Endothelial cell of umbilical vein (primary cell): ENCODE measurements at regions of chr9 and their contacts with region 1.

Region 1: GRCh38 chr9:37913480-37914153 is 9.7 kb upstream of the SLC25A51 start:
- DNase-seq: peak; percentile 84
- H3K4me3 ChIP-seq: no peak overlapping the region
- H3K27ac ChIP-seq: no peak overlapping the region
- H3K4me1 ChIP-seq: peaks cover 17% of the 10 kb centered on the region
- H3K27me3 ChIP-seq: no peaks in the 10 kb centered on the region
- CTCF ChIP-seq: peak; percentile 89 to 92
- POLR2A ChIP-seq: no peak

Region 2: DNA sequence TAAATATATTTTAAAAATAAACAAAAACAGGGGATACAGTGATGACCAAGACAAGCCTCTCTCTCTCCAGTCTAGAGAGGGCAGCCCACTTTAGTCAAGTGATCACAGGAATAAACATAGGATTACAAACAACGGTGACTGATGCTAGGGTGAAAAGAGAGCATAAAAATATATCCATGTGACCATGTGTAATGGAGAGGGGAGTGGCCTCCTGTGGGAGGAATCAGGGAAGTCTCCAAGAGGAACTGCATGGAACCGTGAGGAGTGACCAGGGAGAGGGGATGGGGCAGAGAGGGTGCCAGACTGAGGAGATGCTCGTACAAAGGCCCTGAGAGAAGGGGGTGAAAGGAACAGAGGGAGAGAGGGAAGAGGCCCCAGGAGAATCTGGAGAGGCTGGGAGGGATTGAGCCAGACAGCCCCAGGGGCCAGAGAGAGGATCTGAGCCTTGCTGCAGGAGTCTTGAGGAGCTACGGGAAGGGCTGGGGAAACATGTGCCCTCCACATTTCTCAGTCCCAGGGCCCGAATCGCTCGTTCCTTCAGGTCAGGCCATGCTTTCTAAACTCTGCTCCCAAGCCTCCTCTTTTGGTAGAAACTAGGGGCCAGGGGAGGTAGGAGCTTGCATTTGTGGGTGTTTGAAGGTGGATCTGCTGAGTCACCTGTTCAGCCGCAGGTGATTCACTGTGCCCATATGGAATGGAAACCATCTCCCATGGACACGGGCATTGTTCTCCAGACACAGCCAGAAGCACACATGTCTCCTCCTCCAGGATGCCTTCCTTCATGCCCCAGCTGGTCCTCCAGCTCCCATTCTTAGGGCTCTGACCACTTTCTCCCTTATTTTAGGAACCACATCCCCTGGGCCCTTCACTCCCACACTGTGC is 943.4 kb before region 1 on chr9:
- CTCF ChIA-PET with region 1: no interaction called
- POLR2A ChIA-PET with region 1: no interaction called
- dilution Hi-C with region 1: no loop called
- intact Hi-C with region 1: no loop called
- DNase-seq: no peak
- H3K4me3 ChIP-seq: no peak overlapping the region
- H3K27ac ChIP-seq: no peak overlapping the region
- H3K4me1 ChIP-seq: no peaks in the 10 kb centered on the region
- H3K27me3 ChIP-seq: peaks cover 0 to 3% of the 10 kb centered on the region in 2 experiments
- CTCF ChIP-seq: no peak
- POLR2A ChIP-seq: no peak

Region 3: GRCh38 chr9:37820142-37820541 is 93.5 kb before region 1 on chr9:
- CTCF ChIA-PET with region 1: no interaction called
- POLR2A ChIA-PET with region 1: no interaction called
- dilution Hi-C with region 1: no loop called
- intact Hi-C with region 1: no loop called
- DNase-seq: no peak
- H3K4me3 ChIP-seq: no peak overlapping the region
- H3K27ac ChIP-seq: no peak overlapping the region
- H3K4me1 ChIP-seq: no peaks in the 10 kb centered on the region
- H3K27me3 ChIP-seq: no peaks in the 10 kb centered on the region
- CTCF ChIP-seq: no peak
- POLR2A ChIP-seq: no peak

Region 4: DNA sequence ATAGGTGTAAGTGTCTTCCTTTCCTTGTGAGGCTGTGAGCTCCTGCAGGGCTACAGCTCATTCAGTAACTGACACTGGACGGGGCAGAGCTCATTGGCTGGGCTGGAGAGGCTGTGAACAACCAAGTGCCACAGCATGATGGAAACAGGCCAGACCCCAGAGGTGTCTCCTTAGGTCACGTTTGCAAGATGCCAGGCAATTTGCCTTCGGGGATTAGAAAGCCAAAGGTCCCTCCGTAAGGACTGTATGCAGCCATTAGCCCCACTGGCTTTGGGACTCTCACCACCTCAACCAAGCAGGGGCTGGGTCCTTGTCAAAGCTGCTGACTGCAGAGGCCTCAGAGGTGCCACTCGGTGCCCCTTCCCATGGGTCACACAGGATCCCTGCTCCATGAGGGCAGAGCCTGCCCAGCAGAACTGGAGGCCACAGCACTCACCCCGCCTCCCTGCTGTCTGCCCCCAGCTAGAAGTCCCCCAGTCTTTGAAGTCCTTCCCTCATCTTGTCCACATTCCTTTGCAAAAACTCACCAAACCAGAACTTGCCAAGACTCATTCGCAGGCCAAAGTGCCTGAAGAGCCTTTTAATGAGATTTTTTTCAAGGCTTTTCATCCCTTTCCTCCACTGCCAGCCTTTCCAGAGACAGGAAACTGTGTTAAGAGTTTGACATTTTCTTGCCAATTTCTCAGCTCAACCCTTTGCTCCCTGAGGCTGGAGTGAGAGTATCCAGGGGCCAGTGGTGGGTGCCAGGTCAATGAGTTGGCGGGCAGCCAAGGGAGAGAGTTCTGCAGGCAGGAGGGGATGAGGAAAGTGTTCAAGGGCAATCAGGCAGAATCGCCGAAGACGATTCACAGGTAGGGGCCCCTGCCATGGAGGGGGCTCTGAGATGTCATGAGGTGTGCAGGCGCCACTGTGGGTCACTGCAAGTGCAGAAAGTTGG is 30.0 kb after region 1 on chr9:
- CTCF ChIA-PET with region 1: interaction called, 23 read pairs
- POLR2A ChIA-PET with region 1: interaction called, 3 read pairs
- dilution Hi-C with region 1: no loop called
- intact Hi-C with region 1: loop called (anchors 1 kb)
- DNase-seq: peak; percentile 58
- H3K4me3 ChIP-seq: no peak overlapping the region
- H3K27ac ChIP-seq: peak overlapping the region; percentile 16
- H3K4me1 ChIP-seq: peaks cover 28% of the 10 kb centered on the region
- H3K27me3 ChIP-seq: no peaks in the 10 kb centered on the region
- CTCF ChIP-seq: no peak
- POLR2A ChIP-seq: no peak

Region 5: GRCh38 chr9:38008168-38009034 is 94.8 kb after region 1 on chr9:
- CTCF ChIA-PET with region 1: interaction called, 6 read pairs
- POLR2A ChIA-PET with region 1: no interaction called
- dilution Hi-C with region 1: no loop called
- intact Hi-C with region 1: loop called (anchors 2 kb)
- DNase-seq: peak; percentile 80
- H3K4me3 ChIP-seq: no peak overlapping the region
- H3K27ac ChIP-seq: peak overlapping the region; percentile 79
- H3K4me1 ChIP-seq: peaks cover 30% of the 10 kb centered on the region
- H3K27me3 ChIP-seq: no peaks in the 10 kb centered on the region
- CTCF ChIP-seq: no peak
- POLR2A ChIP-seq: no peak

Region 6: GRCh38 chr9:38035873-38036272 is 122.3 kb after region 1 on chr9:
- CTCF ChIA-PET with region 1: interaction called, 12 read pairs
- POLR2A ChIA-PET with region 1: no interaction called
- dilution Hi-C with region 1: no loop called
- intact Hi-C with region 1: no loop called
- DNase-seq: peak; percentile 56
- H3K4me3 ChIP-seq: no peak overlapping the region
- H3K27ac ChIP-seq: peak overlapping the region; percentile 66
- H3K4me1 ChIP-seq: peaks cover 59% of the 10 kb centered on the region
- H3K27me3 ChIP-seq: no peaks in the 10 kb centered on the region
- CTCF ChIP-seq: no peak
- POLR2A ChIP-seq: no peak

Region 7: GRCh38 chr9:38088006-38088925 is 174.6 kb after region 1 on chr9:
- CTCF ChIA-PET with region 1: interaction called, 82 read pairs
- POLR2A ChIA-PET with region 1: no interaction called
- dilution Hi-C with region 1: no loop called
- intact Hi-C with region 1: loop called (anchors 1 kb)
- DNase-seq: peak; percentile 70
- H3K4me3 ChIP-seq: no peak overlapping the region
- H3K27ac ChIP-seq: no peak overlapping the region
- H3K4me1 ChIP-seq: peaks cover 11% of the 10 kb centered on the region
- H3K27me3 ChIP-seq: no peaks in the 10 kb centered on the region
- CTCF ChIP-seq: peak; percentile 96 to 98
- POLR2A ChIP-seq: no peak

Region 8: GRCh38 chr9:38263532-38263931 is 349.9 kb after region 1 on chr9:
- CTCF ChIA-PET with region 1: interaction called, 84 read pairs
- POLR2A ChIA-PET with region 1: no interaction called
- dilution Hi-C with region 1: no loop called
- intact Hi-C with region 1: no loop called
- DNase-seq: peak; percentile 53
- H3K4me3 ChIP-seq: no peak overlapping the region
- H3K27ac ChIP-seq: no peak overlapping the region
- H3K4me1 ChIP-seq: no peaks in the 10 kb centered on the region
- H3K27me3 ChIP-seq: peaks cover 6 to 13% of the 10 kb centered on the region in 2 experiments
- CTCF ChIP-seq: peak in 1 of 2 donors; percentile 35
- POLR2A ChIP-seq: no peak

Region 9: DNA sequence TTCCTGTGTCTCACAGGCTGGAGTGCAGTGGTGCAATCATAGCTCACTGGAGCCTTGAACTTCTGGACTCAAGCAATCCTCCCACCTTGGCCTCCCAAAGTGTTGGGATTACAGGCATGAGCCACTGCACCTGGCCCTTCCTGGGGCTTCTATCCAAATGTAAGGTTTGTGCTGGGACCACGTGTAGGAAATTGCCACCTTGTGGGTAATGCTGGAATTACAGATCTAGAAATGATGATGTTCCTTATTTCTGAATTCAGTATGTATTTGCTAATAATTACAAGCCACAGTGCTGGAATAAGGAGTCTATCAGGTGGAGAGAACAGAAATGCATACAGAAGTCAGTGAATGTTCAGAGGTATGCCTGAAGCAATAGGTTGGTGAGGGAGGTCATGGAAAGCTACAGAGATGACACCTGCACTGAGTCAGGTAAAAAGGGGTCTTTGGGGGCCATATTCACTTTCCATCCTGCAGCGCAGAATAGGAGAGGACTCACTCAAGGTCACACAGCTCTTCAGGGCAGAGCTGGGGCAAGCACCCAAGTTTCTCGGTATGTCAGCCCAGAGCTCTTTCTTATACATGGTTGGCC is 519.4 kb after region 1 on chr9:
- CTCF ChIA-PET with region 1: interaction called, 5 read pairs
- POLR2A ChIA-PET with region 1: no interaction called
- dilution Hi-C with region 1: no loop called
- intact Hi-C with region 1: loop called (anchors 1 kb)
- DNase-seq: peak; percentile 37
- H3K4me3 ChIP-seq: no peak overlapping the region
- H3K27ac ChIP-seq: no peak overlapping the region
- H3K4me1 ChIP-seq: no peaks in the 10 kb centered on the region
- H3K27me3 ChIP-seq: peaks cover 5 to 8% of the 10 kb centered on the region in 2 experiments
- CTCF ChIP-seq: peak; percentile 40 to 46
- POLR2A ChIP-seq: no peak